ENCODE measurements at regions of chr11 and their contacts with region 1.

Region 1: GRCh38 chr11:355581-356458 is 13.5 kb upstream of the B4GALNT4 start:
- DNase-seq: peak; percentile 90 to 97 (median 96)
- ATAC-seq: peak; percentile 88 to 92 (median 90)
- H3K4me3 ChIP-seq: peak overlapping the region in 3 of 4 donors; percentile 10 to 49 (median 36)
- H3K27ac ChIP-seq: peak overlapping the region; percentile 92 to 98 (median 95)
- H3K4me1 ChIP-seq: peaks cover 17 to 28% (median 20%) of the 10 kb centered on the region in 3 donors
- H3K27me3 ChIP-seq: no peaks in the 10 kb centered on the region
- CTCF ChIP-seq: no peak

Region 2: GRCh38 chr11:236774-237767 is 118.7 kb before region 1 on chr11 and contains the start of gene PSMD13:
- intact Hi-C with region 1: no loop called
- DNase-seq: peak; percentile 80 to 93 (median 84)
- ATAC-seq: peak; percentile 92 to 97 (median 92)
- H3K4me3 ChIP-seq: peak within 1 kb of the TSS; percentile 87 to 99 (median 92)
- H3K27ac ChIP-seq: peak within 1 kb of the TSS; percentile 83 to 95 (median 92)
- H3K4me1 ChIP-seq: peaks cover 7 to 23% (median 9%) of the 10 kb centered on the region in 3 donors
- H3K27me3 ChIP-seq: no peaks in the 10 kb centered on the region
- CTCF ChIP-seq: no peak
- total RNA-seq, gene PSMD13: 35.5 to 48.3 (median 41.9) TPM

Region 3: GRCh38 chr11:304915-305843 is 50.6 kb before region 1 on chr11:
- intact Hi-C with region 1: loop called in 2 of 3 experiments (anchors 5 to 10 kb)
- DNase-seq: peak in 4 of 6 donors; percentile 33 to 65 (median 60)
- ATAC-seq: peak in 3 of 4 donors; percentile 60 to 72 (median 60)
- H3K4me3 ChIP-seq: no peak overlapping the region
- H3K27ac ChIP-seq: no peak overlapping the region
- H3K4me1 ChIP-seq: peaks cover 0 to 5% (median 3%) of the 10 kb centered on the region in 3 donors
- H3K27me3 ChIP-seq: no peaks in the 10 kb centered on the region
- CTCF ChIP-seq: peak; percentile 39 to 50 (median 48)

Measured in pancreas (tissue), 10 donors.